ENCODE measurements at regions of chr11 and their contacts with region 1.

Region 1: GRCh38 chr11:17077520-17078401 is at the start of gene RPS13:
- DNase-seq: peak; percentile 97
- ATAC-seq: peak; percentile 97
- H3K4me3 Mint-ChIP-seq: peak within 1 kb of the TSS; percentile 100
- H3K27ac Mint-ChIP-seq: peak within 1 kb of the TSS; percentile 98
- H3K4me1 Mint-ChIP-seq: peaks cover 30% of the 10 kb centered on the region
- H3K27me3 Mint-ChIP-seq: no peaks in the 10 kb centered on the region
- total RNA-seq, gene RPS13: 1,242 to 1,685 TPM

Region 2: GRCh38 chr11:16738193-16738946 is 339.4 kb before region 1 on chr11 and contains the start of gene C11orf58:
- CTCF ChIA-PET with region 1: no interaction called
- POLR2A ChIA-PET with region 1: interaction called, 21 read pairs
- intact Hi-C with region 1: loop called (anchors 1 kb)
- DNase-seq: peak; percentile 96
- ATAC-seq: peak; percentile 97
- H3K4me3 Mint-ChIP-seq: no peak within 1 kb of the TSS
- H3K27ac Mint-ChIP-seq: peak within 1 kb of the TSS; percentile 92
- H3K4me1 Mint-ChIP-seq: peaks cover 23% of the 10 kb centered on the region
- H3K27me3 Mint-ChIP-seq: no peaks in the 10 kb centered on the region
- total RNA-seq, gene C11orf58: 142 to 193 TPM

Region 3: DNA sequence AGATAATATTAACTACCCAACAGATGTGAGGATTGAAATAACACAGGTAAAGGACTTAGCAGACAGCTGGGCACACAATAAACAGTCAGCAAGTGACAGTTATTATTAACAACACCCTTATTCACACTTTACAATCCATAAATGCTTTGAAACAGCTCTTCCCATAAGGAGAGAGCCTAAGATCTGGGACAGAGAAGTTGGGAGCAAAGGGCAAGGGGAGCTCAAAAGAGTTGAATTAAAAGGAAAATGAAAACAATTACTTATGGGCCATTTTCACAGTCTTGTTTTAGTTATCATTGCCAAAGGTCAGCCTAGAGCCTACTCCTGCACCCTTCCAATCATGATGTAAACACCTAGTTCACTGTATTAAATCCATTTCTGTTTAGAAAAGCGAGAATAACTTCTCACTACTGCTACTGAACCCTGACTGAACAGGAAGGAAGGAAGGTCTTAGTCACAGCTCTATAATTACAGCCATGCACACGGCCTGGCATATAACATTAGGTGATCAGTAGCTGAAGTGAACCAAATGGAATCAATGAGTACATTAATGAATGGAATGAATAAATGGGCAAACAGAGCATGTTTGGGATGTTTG is 174.9 kb before region 1 on chr11:
- CTCF ChIA-PET with region 1: interaction called, 3 read pairs
- POLR2A ChIA-PET with region 1: interaction called, 3 read pairs
- intact Hi-C with region 1: loop called in 1 of 2 experiments (anchors 1 kb)
- DNase-seq: peak; percentile 39
- ATAC-seq: peak; percentile 85
- H3K4me3 Mint-ChIP-seq: peak overlapping the region; percentile 46
- H3K27ac Mint-ChIP-seq: peak overlapping the region; percentile 98
- H3K4me1 Mint-ChIP-seq: peaks cover 55% of the 10 kb centered on the region
- H3K27me3 Mint-ChIP-seq: no peaks in the 10 kb centered on the region

Region 4: DNA sequence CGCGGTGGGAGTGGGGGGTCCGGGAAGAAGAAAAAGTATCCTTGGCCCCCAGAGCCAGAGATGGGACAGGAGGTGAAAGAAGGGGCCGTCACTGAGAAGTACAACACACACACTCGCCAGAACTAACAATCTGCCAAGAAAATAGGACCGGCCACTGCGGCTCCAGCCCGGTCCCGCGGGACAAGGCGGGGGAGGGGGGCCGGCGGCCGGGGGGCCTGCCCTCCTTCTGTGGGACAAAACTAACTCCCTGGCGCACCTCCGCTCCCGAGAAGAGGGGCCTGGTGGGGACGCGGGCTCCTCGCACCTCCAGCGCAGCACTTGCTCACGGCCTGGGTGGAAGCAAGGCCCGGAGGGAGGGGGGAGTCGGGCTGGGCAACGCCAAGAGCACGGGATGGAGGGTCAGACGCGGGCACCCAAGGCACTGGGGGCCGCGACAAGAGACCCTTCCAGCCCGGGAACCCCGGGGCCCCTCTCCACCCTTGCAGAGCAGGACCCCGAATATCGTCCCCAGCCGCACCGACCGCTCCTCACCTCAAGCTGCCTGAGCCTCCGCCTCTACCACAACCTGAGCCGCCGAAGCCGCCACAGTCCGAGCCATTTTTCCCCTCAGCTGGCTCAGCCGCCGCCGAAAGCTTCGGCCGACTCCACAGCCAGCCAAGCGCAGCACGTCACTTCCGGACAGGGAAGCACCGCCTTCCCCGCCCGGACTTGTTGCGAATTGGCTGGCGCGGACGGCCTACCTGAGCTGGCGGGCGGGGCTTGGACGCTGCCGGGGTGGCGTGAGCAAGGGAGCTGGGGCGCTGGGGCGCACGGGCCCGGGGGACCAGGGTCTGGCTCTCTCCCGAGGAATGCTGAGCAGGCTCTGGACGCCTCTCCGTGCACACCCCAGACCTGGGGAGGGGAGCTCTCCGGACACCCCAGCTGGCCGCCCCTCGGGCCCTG is 129.8 kb after region 1 on chr11 and contains the start of gene PIK3C2A:
- CTCF ChIA-PET with region 1: no interaction called
- POLR2A ChIA-PET with region 1: interaction called, 11 read pairs
- intact Hi-C with region 1: loop called (anchors 1 kb)
- DNase-seq: peak; percentile 97
- ATAC-seq: peak; percentile 97
- H3K4me3 Mint-ChIP-seq: peak within 1 kb of the TSS; percentile 91
- H3K27ac Mint-ChIP-seq: peak within 1 kb of the TSS; percentile 97
- H3K4me1 Mint-ChIP-seq: peaks cover 40% of the 10 kb centered on the region
- H3K27me3 Mint-ChIP-seq: no peaks in the 10 kb centered on the region
- total RNA-seq, gene PIK3C2A: 23.3 to 27.3 TPM

Region 5: GRCh38 chr11:17354601-17354991 is 276.8 kb after region 1 on chr11:
- CTCF ChIA-PET with region 1: no interaction called
- POLR2A ChIA-PET with region 1: no interaction called
- intact Hi-C with region 1: loop called in 1 of 2 experiments (anchors 2 kb)
- DNase-seq: peak; percentile 76
- ATAC-seq: no peak
- H3K4me3 Mint-ChIP-seq: peak overlapping the region; percentile 77
- H3K27ac Mint-ChIP-seq: no peak overlapping the region
- H3K4me1 Mint-ChIP-seq: peaks cover 35% of the 10 kb centered on the region
- H3K27me3 Mint-ChIP-seq: peaks cover 9% of the 10 kb centered on the region

Region 6: GRCh38 chr11:18105802-18106574 is 1028.2 kb after region 1 on chr11 and contains the start of gene SAAL1:
- CTCF ChIA-PET with region 1: no interaction called
- POLR2A ChIA-PET with region 1: no interaction called
- intact Hi-C with region 1: loop called in 1 of 2 experiments (anchors 10 kb)
- DNase-seq: peak; percentile 95
- ATAC-seq: peak; percentile 97
- H3K4me3 Mint-ChIP-seq: peak within 1 kb of the TSS; percentile 82
- H3K27ac Mint-ChIP-seq: peak within 1 kb of the TSS; percentile 85
- H3K4me1 Mint-ChIP-seq: peaks cover 37% of the 10 kb centered on the region
- H3K27me3 Mint-ChIP-seq: peaks cover 3% of the 10 kb centered on the region
- total RNA-seq, gene SAAL1: 37.4 to 40.9 TPM

Measured in activated CD4-positive, alpha-beta T cell treated with anti-CD3 and anti-CD28 coated beads for 36 hours (primary cell).